HepG2 (cell line): ENCODE measurements at regions of chr7 and their contacts with region 1.

Region 1: GRCh38 chr7:104065491-104065890 is 76.0 kb upstream of the RELN start:
- DNase-seq: peak; percentile 16
- ATAC-seq: peak; percentile 81
- H3K4me3 ChIP-seq: peak overlapping the region in 2 of 3 experiments; percentile 40 to 46; a peak in 3 of 6 replicates
- H3K27ac ChIP-seq: peak overlapping the region; percentile 76
- H3K4me1 ChIP-seq: peaks cover 64% of the 10 kb centered on the region
- H3K27me3 ChIP-seq: no peaks in the 10 kb centered on the region
- CTCF ChIP-seq: no peak
- EP300 ChIP-seq: no peak
- POLR2A ChIP-seq: no peak
- RAD21 ChIP-seq: no peak

Region 2: GRCh38 chr7:104040666-104041065 is 24.8 kb before region 1 on chr7:
- CTCF ChIA-PET with region 1: no interaction called
- POLR2A ChIA-PET with region 1: interaction called, 4 read pairs
- in situ Hi-C with region 1: no loop called
- intact Hi-C with region 1: loop called (anchors 2 kb)
- DNase-seq: no peak
- ATAC-seq: no peak
- H3K4me3 ChIP-seq: no peak overlapping the region
- H3K27ac ChIP-seq: no peak overlapping the region
- H3K4me1 ChIP-seq: peaks cover 36% of the 10 kb centered on the region
- H3K27me3 ChIP-seq: no peaks in the 10 kb centered on the region
- CTCF ChIP-seq: no peak
- EP300 ChIP-seq: no peak
- POLR2A ChIP-seq: no peak
- RAD21 ChIP-seq: no peak